ENCODE measurements at regions of chr7 and their contacts with region 1.

Region 1: GRCh38 chr7:21352540-21353387 is 75.1 kb upstream of the SP4 start:
- DNase-seq: no peak
- H3K4me3 Mint-ChIP-seq: peak overlapping the region; percentile 67
- H3K27ac Mint-ChIP-seq: peak overlapping the region; percentile 96
- H3K4me1 Mint-ChIP-seq: peaks cover 69% of the 10 kb centered on the region
- H3K27me3 Mint-ChIP-seq: no peaks in the 10 kb centered on the region

Region 2: DNA sequence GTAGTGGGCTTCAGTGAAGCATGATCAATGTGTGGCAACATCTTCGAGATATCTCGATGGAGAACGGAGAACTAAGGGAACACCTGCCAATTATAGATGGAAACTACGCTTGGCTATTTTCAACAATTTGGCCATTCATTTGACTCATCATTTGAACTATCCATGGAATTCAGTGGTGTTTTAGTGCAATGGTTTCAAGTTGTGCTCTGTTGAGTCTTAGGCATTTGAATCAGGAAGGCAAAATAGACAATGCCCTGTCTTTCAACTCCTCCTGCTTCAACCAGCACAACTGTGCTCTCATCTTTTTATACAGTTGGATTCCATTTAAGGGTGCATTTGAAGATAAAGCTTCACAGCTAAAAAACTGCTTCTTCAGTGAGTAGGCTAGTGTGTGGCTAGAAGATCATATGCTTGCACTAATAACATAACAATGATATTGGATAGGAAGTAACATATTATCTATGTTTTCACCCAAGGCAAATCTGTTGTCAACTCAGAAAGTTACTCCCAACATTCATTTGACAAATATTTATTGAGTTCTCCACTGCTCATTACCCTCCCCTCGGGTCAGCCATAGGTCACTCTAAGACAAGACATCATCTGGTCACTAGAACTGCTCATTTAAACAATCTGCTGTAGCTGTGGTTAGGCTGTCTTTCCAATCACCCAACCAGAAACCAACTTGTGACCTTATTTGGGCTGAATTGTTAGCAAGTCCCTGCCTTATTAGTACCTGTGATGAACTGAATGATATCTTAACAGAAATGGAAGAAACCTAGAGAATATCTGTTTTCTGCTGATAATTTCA is 239.0 kb before region 1 on chr7:
- intact Hi-C with region 1: no loop called
- DNase-seq: no peak
- H3K4me3 Mint-ChIP-seq: no peak overlapping the region
- H3K27ac Mint-ChIP-seq: no peak overlapping the region
- H3K4me1 Mint-ChIP-seq: no peaks in the 10 kb centered on the region
- H3K27me3 Mint-ChIP-seq: peaks cover 9% of the 10 kb centered on the region

Region 3: DNA sequence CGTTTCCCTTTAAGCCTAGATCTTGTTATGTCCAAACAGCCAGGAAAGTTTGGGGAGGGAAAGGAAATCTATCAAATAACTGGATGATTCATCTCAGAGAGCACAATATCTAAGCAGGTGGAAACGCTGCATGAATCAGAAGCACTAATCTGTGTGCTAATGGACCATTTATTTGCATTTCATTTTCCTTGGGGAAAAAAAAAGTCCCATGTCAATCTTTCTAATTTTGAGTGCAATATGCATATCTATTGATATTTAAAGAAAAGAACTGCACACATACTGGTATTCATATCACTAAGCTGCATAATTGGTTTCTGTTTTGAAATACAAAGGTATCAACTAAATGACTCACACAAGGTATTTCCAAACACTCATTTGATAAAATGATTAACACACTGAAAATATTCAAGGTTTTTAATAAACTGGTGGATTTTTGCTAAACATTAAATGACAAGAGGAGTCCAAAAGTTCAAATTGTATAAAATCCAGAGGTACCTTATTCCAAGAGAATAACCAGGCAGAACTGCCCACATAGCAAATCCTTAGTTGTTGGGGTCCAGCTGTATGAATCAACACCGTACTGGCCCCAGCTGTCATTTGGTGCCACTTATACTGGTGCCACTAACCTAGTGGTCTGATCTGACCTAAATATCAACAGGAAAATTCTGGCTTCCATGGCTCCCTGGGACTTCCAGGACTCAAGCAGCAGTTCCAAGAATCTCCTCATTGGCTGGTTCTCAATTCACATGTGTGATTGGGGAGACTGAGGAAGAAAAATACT is 47.1 kb before region 1 on chr7:
- intact Hi-C with region 1: loop called (anchors 1 kb)
- DNase-seq: no peak
- H3K4me3 Mint-ChIP-seq: no peak overlapping the region
- H3K27ac Mint-ChIP-seq: no peak overlapping the region
- H3K4me1 Mint-ChIP-seq: peaks cover 18% of the 10 kb centered on the region
- H3K27me3 Mint-ChIP-seq: no peaks in the 10 kb centered on the region

Region 4: GRCh38 chr7:21365866-21366624 is 13.3 kb after region 1 on chr7:
- intact Hi-C with region 1: loop called (anchors 1 kb)
- DNase-seq: no peak
- H3K4me3 Mint-ChIP-seq: peak overlapping the region; percentile 9
- H3K27ac Mint-ChIP-seq: peak overlapping the region; percentile 25
- H3K4me1 Mint-ChIP-seq: peaks cover 70% of the 10 kb centered on the region
- H3K27me3 Mint-ChIP-seq: no peaks in the 10 kb centered on the region

Region 5: GRCh38 chr7:21383227-21384220 is 30.8 kb after region 1 on chr7:
- intact Hi-C with region 1: loop called (anchors 1 kb)
- DNase-seq: no peak
- H3K4me3 Mint-ChIP-seq: peak overlapping the region; percentile 60
- H3K27ac Mint-ChIP-seq: peak overlapping the region; percentile 46
- H3K4me1 Mint-ChIP-seq: peaks cover 43% of the 10 kb centered on the region
- H3K27me3 Mint-ChIP-seq: no peaks in the 10 kb centered on the region